Tibial artery (tissue), 4 donors: ENCODE measurements at regions of chr17 and their contacts with region 1.

Region 1: GRCh38 chr17:4733073-4733531 is 1.9 kb downstream of the MED11 start:
- DNase-seq: peak in 1 of 2 donors; percentile 60
- H3K4me3 ChIP-seq: no peak overlapping the region
- H3K27ac ChIP-seq: no peak overlapping the region
- H3K4me1 ChIP-seq: peaks cover 0 to 16% (median 8%) of the 10 kb centered on the region in 4 donors
- H3K27me3 ChIP-seq: no peaks in the 10 kb centered on the region
- CTCF ChIP-seq: no peak

Region 2: GRCh38 chr17:4709794-4710692 is 23.1 kb before region 1 on chr17 and contains the start of gene ARRB2:
- intact Hi-C with region 1: loop called (anchors 2 kb)
- DNase-seq: peak; percentile 98 to 99
- H3K4me3 ChIP-seq: peak within 1 kb of the TSS; percentile 72 to 95
- H3K27ac ChIP-seq: peak within 1 kb of the TSS; percentile 82 to 88
- H3K4me1 ChIP-seq: peaks cover 0 to 13% (median 11%) of the 10 kb centered on the region in 4 donors
- H3K27me3 ChIP-seq: no peaks in the 10 kb centered on the region
- CTCF ChIP-seq: peak; percentile 51 to 57

Region 3: GRCh38 chr17:4789901-4790704 is 57.0 kb after region 1 on chr17:
- intact Hi-C with region 1: loop called (anchors 5 kb)
- DNase-seq: peak; percentile 77 to 90
- H3K4me3 ChIP-seq: peak overlapping the region; percentile 66 to 73
- H3K27ac ChIP-seq: peak overlapping the region; percentile 86 to 89
- H3K4me1 ChIP-seq: peaks cover 0 to 45% (median 30%) of the 10 kb centered on the region in 4 donors
- H3K27me3 ChIP-seq: peaks cover 0 to 9% of the 10 kb centered on the region in 2 donors
- CTCF ChIP-seq: peak; percentile 79 to 81

Region 4: DNA sequence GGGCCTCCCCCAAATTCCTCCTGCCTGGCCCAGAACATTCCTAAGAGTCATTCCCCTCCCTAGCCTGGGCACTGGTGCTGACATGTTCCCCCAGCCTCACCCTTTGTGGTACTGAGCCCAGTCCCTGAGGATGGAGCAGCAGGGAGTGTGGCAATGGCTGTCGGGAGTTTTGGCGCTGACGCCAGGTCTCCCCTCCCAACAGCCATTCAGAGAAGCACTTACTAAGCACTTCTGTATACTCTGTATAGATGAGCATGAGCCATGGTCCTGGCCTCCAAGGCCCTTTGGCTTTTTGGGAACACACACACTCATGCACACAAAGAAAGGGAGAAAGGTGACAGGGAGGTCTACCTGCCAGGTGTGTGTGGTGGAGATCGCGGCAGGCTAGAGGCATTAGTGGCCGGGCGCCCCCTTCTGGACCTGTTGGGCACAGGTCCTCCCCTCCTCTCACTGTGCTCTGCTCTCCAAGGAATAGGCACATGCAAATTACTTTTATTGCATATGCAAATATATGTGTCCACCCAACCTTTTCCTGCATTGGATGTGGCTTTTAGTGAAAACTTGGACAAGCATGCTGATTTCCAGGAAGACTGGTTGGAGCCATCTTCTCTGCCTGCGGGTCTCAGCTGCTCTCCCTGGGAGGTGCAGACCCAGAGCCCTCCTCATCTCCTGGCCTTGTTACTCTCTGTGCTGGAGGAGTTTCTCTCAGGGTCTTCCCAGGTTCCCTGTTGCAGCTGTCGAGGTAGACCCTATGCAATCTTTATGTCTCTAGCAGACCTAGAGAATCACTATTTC is 148.9 kb after region 1 on chr17:
- intact Hi-C with region 1: loop called (anchors 5 kb)
- DNase-seq: no peak
- H3K4me3 ChIP-seq: no peak overlapping the region
- H3K27ac ChIP-seq: no peak overlapping the region
- H3K4me1 ChIP-seq: peaks cover 0 to 9% (median 0%) of the 10 kb centered on the region in 4 donors
- H3K27me3 ChIP-seq: no peaks in the 10 kb centered on the region
- CTCF ChIP-seq: peak; percentile 48 to 58